Activated T-helper 1 cell treated with anti-CD3 and anti-CD28 coated beads, Interleukin-12 subunit alpha, Interleukin-12 subunit beta, Interleukin-2, Interleukin-4 antibody, amounts not matched to agents 30 ng/mL and 10 ng/mL and 1 ng/mL, durations not matched to agents 14 hours and 24 hours and 36 hours (primary cell): ENCODE measurements at regions of chr5 and their contacts with region 1.

Region 1: DNA sequence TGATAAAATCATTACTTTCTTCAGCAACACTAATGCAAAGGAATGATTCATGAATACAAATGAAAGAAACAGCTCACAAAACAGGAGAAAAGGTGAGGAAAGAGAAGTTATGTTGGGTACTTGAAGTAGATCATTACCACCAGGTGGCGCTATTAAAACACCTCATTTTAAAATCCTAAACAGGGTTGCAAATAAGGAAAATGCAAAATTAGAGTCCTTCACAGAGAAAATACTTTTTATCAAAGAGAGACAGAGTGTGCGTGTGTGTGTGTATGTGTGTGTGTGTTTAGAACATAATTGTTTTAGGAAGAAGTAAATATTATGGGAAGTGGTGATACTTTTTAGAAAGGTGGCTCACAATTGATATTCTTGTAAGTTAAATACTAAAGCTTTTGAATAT is 49.5 kb upstream of the CD180 start:
- DNase-seq: no peak
- H3K4me3 Mint-ChIP-seq: no peak overlapping the region
- H3K27ac Mint-ChIP-seq: no peak overlapping the region
- H3K4me1 Mint-ChIP-seq: no peaks in the 10 kb centered on the region
- H3K27me3 Mint-ChIP-seq: no peaks in the 10 kb centered on the region

Region 2: GRCh38 chr5:66015196-66015960 is 1230.7 kb before region 1 on chr5:
- intact Hi-C with region 1: no loop called
- DNase-seq: no peak
- H3K4me3 Mint-ChIP-seq: no peak overlapping the region
- H3K27ac Mint-ChIP-seq: no peak overlapping the region
- H3K4me1 Mint-ChIP-seq: peaks cover 30% of the 10 kb centered on the region
- H3K27me3 Mint-ChIP-seq: no peaks in the 10 kb centered on the region

Region 3: GRCh38 chr5:67156976-67157583 is 89.0 kb before region 1 on chr5:
- intact Hi-C with region 1: loop called (anchors 1 kb)
- DNase-seq: no peak
- H3K4me3 Mint-ChIP-seq: no peak overlapping the region
- H3K27ac Mint-ChIP-seq: peak overlapping the region; percentile 25
- H3K4me1 Mint-ChIP-seq: peaks cover 51% of the 10 kb centered on the region
- H3K27me3 Mint-ChIP-seq: no peaks in the 10 kb centered on the region

Region 4: DNA sequence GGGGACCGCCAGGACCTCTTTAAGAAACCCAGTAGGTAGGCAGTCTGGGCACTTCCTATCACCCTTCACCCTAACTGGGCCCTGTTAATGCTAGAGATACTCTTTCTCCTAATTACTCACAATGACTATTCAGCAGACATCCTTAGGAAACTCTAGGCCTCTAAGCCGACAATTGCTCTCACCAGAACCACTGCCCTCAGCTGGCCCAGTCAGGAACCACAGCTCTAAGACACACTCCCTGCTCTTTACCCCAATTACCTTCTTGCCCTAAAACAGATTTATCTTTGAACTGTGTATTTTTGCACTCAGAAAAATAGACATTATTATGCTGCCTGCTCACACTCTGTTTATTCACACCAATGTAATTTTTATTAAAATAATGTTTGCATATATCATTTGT is 1415.1 kb after region 1 on chr5:
- intact Hi-C with region 1: loop called (anchors 2 kb)
- DNase-seq: no peak
- H3K4me3 Mint-ChIP-seq: no peak overlapping the region
- H3K27ac Mint-ChIP-seq: no peak overlapping the region
- H3K4me1 Mint-ChIP-seq: no peaks in the 10 kb centered on the region
- H3K27me3 Mint-ChIP-seq: peaks cover 2% of the 10 kb centered on the region